PC-9 (cell line): ENCODE measurements at regions of chr14 and their contacts with region 1.

Region 1: GRCh38 chr14:37588946-37589714 is 5.9 kb downstream of the FOXA1 start:
- DNase-seq: no peak
- H3K4me3 ChIP-seq: peak overlapping the region; percentile 94
- H3K27ac ChIP-seq: peak overlapping the region; percentile 99
- H3K4me1 ChIP-seq: peaks cover 19% of the 10 kb centered on the region
- H3K27me3 ChIP-seq: no peaks in the 10 kb centered on the region
- CTCF ChIP-seq: no peak

Region 2: GRCh38 chr14:37422319-37422718 is 166.8 kb before region 1 on chr14:
- CTCF ChIA-PET with region 1: no interaction called
- POLR2A ChIA-PET with region 1: no interaction called
- intact Hi-C with region 1: loop called (anchors 1 kb)
- DNase-seq: no peak
- H3K4me3 ChIP-seq: no peak overlapping the region
- H3K27ac ChIP-seq: peak overlapping the region; percentile 37; the same call in 1 of the 2 replicates
- H3K4me1 ChIP-seq: peaks cover 13% of the 10 kb centered on the region
- H3K27me3 ChIP-seq: no peaks in the 10 kb centered on the region
- CTCF ChIP-seq: no peak

Region 3: GRCh38 chr14:37428946-37429345 is 160.2 kb before region 1 on chr14:
- CTCF ChIA-PET with region 1: no interaction called
- POLR2A ChIA-PET with region 1: interaction called, 21 read pairs
- intact Hi-C with region 1: no loop called
- DNase-seq: peak in 1 of 2 experiments; percentile 78
- H3K4me3 ChIP-seq: peak overlapping the region; percentile 6; the same call in 1 of the 2 replicates
- H3K27ac ChIP-seq: peak overlapping the region; percentile 89
- H3K4me1 ChIP-seq: peaks cover 23% of the 10 kb centered on the region
- H3K27me3 ChIP-seq: no peaks in the 10 kb centered on the region
- CTCF ChIP-seq: no peak

Region 4: DNA sequence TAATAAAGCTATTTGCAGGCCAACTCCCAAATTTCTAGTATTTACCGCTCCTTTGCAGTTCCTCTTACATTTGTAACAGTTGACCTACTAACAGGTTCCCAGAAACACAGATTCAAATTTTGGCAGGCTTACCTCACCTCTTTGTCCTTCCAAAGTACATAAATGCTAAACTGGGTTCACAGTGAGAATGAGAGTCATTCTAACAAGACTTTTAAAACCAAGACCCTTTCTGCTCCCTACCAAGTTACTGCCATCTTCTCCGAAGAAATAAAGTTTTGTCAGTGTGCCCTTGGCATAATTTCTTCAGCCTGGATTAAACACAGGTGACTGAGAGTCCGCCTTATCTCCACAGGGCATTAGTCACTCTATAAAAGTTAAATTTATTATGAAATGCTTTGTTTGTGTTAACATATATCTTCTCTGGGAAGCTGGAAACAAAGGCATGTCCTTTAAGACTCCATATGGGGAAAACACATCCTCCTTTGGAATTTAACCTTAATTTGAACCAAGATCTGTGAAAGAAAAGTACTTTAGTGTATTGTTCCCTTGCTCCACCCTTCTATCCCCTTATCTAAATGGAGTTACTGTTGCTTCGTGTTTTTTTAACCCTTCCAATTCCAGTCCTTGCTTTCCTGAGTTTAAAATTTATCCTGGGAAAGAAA is 22.2 kb before region 1 on chr14:
- CTCF ChIA-PET with region 1: no interaction called
- POLR2A ChIA-PET with region 1: interaction called, 23 read pairs
- intact Hi-C with region 1: loop called (anchors 2 kb)
- DNase-seq: peak in 1 of 2 experiments; percentile 96
- H3K4me3 ChIP-seq: peak overlapping the region; percentile 59
- H3K27ac ChIP-seq: peak overlapping the region; percentile 92
- H3K4me1 ChIP-seq: peaks cover 40% of the 10 kb centered on the region
- H3K27me3 ChIP-seq: no peaks in the 10 kb centered on the region
- CTCF ChIP-seq: no peak